MCF 10A (cell line): ENCODE measurements at regions of chr19 and their contacts with region 1.

Region 1: DNA sequence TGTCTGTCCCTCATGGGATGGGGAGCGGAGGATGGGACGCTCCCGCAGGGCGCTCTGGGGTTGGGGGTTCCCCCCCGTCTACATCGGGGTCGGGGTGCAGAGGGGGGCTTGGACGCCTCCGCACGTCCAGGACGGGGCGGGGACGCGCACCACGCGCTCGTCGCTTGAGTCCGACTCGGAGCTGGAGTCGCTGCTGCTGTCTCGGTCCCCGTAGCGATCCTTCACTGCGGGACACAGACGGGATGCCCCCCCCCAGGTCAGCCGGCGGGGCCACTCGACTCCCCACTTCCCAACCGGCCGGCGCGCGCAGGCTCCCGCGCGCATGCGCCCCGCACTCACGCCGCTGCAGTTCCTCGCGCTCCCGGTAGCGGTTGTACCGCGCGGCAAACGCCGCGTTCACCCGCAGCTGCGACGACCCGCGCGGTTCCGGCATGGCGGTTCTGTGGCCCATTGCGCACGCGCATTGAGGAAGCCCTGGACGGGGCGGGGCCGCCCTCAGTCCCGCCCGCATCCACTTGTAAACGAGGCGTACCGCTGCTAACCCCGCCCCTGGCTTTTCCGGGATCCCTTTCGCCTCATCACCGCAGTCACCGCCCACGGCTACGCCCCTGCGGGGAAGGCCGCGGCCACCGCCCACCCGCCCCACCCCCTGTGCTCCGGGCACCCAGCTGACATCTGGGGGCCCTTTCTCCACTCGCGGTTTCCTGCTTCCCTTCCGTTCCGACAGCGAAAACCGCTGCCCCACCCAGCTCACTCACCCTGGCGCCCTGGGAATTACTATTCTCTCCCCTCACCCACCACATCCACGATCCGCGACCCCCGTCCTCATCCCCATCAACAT is at the start of gene KRI1:
- DNase-seq: peak; percentile 98
- H3K4me3 Mint-ChIP-seq: peak within 1 kb of the TSS; percentile 96
- H3K27ac Mint-ChIP-seq: peak within 1 kb of the TSS; percentile 94
- H3K4me1 Mint-ChIP-seq: peaks cover 31% of the 10 kb centered on the region
- H3K27me3 Mint-ChIP-seq: no peaks in the 10 kb centered on the region
- CTCF ChIP-seq: no peak
- total RNA-seq, gene KRI1: 23.3 and 27.4 TPM in 2 replicates

Region 2: DNA sequence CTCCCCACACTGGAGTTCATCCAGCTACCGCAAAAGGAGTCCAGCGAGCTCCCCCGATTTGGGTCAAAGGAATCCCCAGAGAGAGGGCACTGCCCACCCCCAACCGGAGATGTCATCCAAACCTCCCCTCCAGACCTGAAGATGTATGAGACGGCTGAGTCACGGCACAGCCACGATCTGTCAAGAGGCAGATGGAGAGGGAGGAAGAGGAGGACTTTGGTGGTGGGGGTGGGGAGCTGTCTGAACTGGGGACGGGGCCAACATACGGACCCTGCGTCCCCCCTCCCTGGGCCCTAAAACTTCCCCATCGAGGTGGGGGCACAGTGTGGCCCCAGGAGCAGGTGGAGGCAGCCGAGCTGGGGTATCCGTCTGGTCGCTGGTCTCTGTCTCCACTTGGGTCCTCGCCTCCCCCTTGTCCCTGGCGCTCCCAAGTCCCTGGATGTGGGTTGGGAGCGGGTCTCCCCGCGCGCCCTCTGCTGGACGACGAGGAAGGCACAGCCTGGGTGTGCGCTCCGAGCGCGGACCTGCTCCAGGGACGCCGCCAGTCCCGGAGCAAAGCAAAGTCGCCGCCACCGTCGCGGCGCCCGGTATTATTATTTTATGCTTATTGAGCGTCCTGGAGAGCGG is 141.7 kb before region 1 on chr19:
- CTCF ChIA-PET with region 1: no interaction called
- POLR2A ChIA-PET with region 1: no interaction called
- intact Hi-C with region 1: loop called (anchors 5 kb)
- DNase-seq: peak; percentile 82
- H3K4me3 Mint-ChIP-seq: peak overlapping the region; percentile 53
- H3K27ac Mint-ChIP-seq: no peak overlapping the region
- H3K4me1 Mint-ChIP-seq: peaks cover 9% of the 10 kb centered on the region
- H3K27me3 Mint-ChIP-seq: peaks cover 44% of the 10 kb centered on the region
- CTCF ChIP-seq: peak; percentile 81

Region 3: GRCh38 chr19:10454267-10454666 is 111.5 kb before region 1 on chr19:
- CTCF ChIA-PET with region 1: no interaction called
- POLR2A ChIA-PET with region 1: no interaction called
- intact Hi-C with region 1: no loop called
- DNase-seq: peak; percentile 38
- H3K4me3 Mint-ChIP-seq: no peak overlapping the region
- H3K27ac Mint-ChIP-seq: no peak overlapping the region
- H3K4me1 Mint-ChIP-seq: no peaks in the 10 kb centered on the region
- H3K27me3 Mint-ChIP-seq: no peaks in the 10 kb centered on the region
- CTCF ChIP-seq: no peak

Region 4: GRCh38 chr19:10543420-10544241 is 22.2 kb before region 1 on chr19 and contains the start of gene ATG4D:
- CTCF ChIA-PET with region 1: interaction called, 12 read pairs
- POLR2A ChIA-PET with region 1: interaction called, 11 read pairs
- intact Hi-C with region 1: loop called (anchors 1 kb)
- DNase-seq: peak; percentile 83
- H3K4me3 Mint-ChIP-seq: peak within 1 kb of the TSS; percentile 80
- H3K27ac Mint-ChIP-seq: peak within 1 kb of the TSS; percentile 87
- H3K4me1 Mint-ChIP-seq: peaks cover 6% of the 10 kb centered on the region
- H3K27me3 Mint-ChIP-seq: peaks cover 11% of the 10 kb centered on the region
- CTCF ChIP-seq: no peak
- total RNA-seq, gene ATG4D: 22.6 and 36.8 TPM in 2 replicates

Region 5: DNA sequence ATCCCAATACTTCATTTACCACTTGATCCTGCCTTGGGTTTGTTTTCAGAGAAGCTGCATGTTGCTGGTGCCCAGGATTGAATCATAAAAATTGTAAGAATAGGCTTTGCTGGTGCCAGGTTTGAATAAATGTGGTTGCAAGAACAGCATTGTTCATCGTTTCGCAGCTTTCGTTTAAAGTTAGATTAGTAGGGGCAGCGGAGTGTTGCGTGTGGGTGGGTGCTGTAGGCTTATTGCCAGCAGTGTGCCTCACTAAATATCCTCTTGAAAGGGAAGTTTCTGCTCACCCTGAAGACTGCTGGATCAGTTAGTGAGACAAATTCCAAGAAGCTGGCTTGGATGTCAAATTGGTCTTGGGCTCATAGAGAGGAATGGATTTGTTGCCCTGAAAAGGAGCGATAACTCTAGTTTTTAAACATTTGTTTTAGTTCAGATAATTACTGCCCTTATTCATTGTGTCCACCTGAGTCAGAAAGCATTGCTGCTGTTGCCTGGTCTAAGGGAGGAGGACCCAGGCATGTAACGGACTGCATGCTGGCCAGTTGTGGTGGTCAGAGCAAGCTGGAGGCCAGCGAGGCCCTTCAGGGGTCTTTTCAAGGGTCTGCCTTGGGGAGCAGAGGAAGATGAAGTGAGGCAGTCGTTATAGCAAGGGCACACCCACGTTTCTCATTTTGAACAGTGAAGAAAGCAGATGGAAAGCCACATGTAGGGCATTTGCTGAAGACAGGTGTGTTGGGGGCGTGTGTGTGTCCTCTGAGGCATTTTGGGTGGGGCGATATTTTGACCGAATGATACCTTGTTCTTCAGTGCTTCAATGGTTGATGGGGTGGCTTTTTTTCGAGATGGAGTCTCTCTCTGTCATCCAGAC is 96.8 kb after region 1 on chr19:
- CTCF ChIA-PET with region 1: no interaction called
- POLR2A ChIA-PET with region 1: no interaction called
- intact Hi-C with region 1: no loop called
- DNase-seq: no peak
- H3K4me3 Mint-ChIP-seq: no peak overlapping the region
- H3K27ac Mint-ChIP-seq: no peak overlapping the region
- H3K4me1 Mint-ChIP-seq: peaks cover 6% of the 10 kb centered on the region
- H3K27me3 Mint-ChIP-seq: no peaks in the 10 kb centered on the region
- CTCF ChIP-seq: no peak

Region 6: GRCh38 chr19:10915130-10916091 is 349.6 kb after region 1 on chr19:
- CTCF ChIA-PET with region 1: no interaction called
- POLR2A ChIA-PET with region 1: no interaction called
- intact Hi-C with region 1: no loop called
- DNase-seq: peak; percentile 92
- H3K4me3 Mint-ChIP-seq: peak overlapping the region; percentile 25
- H3K27ac Mint-ChIP-seq: peak overlapping the region; percentile 57
- H3K4me1 Mint-ChIP-seq: peaks cover 5% of the 10 kb centered on the region
- H3K27me3 Mint-ChIP-seq: no peaks in the 10 kb centered on the region
- CTCF ChIP-seq: no peak